Endothelial cell of umbilical vein (primary cell): ENCODE measurements at regions of chr2 and their contacts with region 1.

Region 1: DNA sequence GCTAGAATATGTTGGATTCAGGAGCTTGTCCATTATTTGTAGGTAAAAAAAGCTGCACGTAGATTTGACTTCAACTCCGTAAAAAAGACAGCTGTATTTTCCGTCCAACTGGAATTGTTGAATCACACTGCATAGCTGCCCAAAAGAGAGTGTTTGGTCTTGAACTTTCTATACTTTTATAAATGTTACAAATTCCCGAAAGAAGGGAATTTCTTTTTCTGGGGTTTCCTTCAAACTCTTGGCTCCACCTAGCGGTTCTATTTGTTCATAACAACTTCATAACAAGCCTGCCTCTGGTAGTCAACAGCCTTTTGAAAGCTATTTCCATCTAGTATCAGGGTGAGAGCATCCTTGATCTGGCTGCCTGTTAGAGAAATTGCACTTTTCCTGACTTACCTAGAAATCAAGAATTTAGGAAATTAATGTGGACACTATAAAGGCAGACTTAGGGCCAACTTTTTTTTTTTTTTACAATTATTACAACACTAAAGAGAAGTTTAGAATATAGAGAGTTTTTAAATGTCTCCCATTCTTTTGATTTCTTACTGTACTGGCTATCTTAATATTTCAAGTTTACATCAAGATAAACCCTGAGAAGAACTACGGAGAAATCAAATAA is 48.1 kb downstream of the TMEM185B start:
- DNase-seq: peak; percentile 75
- H3K4me3 ChIP-seq: no peak overlapping the region
- H3K27ac ChIP-seq: no peak overlapping the region
- H3K4me1 ChIP-seq: no peaks in the 10 kb centered on the region
- H3K27me3 ChIP-seq: no peaks in the 10 kb centered on the region
- CTCF ChIP-seq: peak; percentile 46 to 57
- POLR2A ChIP-seq: no peak

Region 2: GRCh38 chr2:119641562-119642258 is 533.4 kb before region 1 on chr2:
- CTCF ChIA-PET with region 1: interaction called, 34 read pairs
- POLR2A ChIA-PET with region 1: no interaction called
- dilution Hi-C with region 1: no loop called
- intact Hi-C with region 1: loop called (anchors 5 kb)
- DNase-seq: peak; percentile 78
- H3K4me3 ChIP-seq: no peak overlapping the region
- H3K27ac ChIP-seq: no peak overlapping the region
- H3K4me1 ChIP-seq: peaks cover 25% of the 10 kb centered on the region
- H3K27me3 ChIP-seq: peaks cover 2 to 5% of the 10 kb centered on the region in 2 experiments
- CTCF ChIP-seq: peak; percentile 92 to 95
- POLR2A ChIP-seq: no peak

Region 3: GRCh38 chr2:119753041-119753929 is 421.8 kb before region 1 on chr2:
- CTCF ChIA-PET with region 1: interaction called, 67 read pairs
- POLR2A ChIA-PET with region 1: no interaction called
- dilution Hi-C with region 1: no loop called
- intact Hi-C with region 1: loop called (anchors 1 kb)
- DNase-seq: peak; percentile 65
- H3K4me3 ChIP-seq: no peak overlapping the region
- H3K27ac ChIP-seq: no peak overlapping the region
- H3K4me1 ChIP-seq: peaks cover 14% of the 10 kb centered on the region
- H3K27me3 ChIP-seq: no peaks in the 10 kb centered on the region
- CTCF ChIP-seq: peak; percentile 67 to 68
- POLR2A ChIP-seq: no peak

Region 4: GRCh38 chr2:119888680-119889079 is 286.4 kb before region 1 on chr2:
- CTCF ChIA-PET with region 1: interaction called, 10 read pairs
- POLR2A ChIA-PET with region 1: no interaction called
- dilution Hi-C with region 1: no loop called
- intact Hi-C with region 1: no loop called
- DNase-seq: peak; percentile 27
- H3K4me3 ChIP-seq: no peak overlapping the region
- H3K27ac ChIP-seq: no peak overlapping the region
- H3K4me1 ChIP-seq: peaks cover 5% of the 10 kb centered on the region
- H3K27me3 ChIP-seq: no peaks in the 10 kb centered on the region
- CTCF ChIP-seq: no peak
- POLR2A ChIP-seq: no peak

Region 5: DNA sequence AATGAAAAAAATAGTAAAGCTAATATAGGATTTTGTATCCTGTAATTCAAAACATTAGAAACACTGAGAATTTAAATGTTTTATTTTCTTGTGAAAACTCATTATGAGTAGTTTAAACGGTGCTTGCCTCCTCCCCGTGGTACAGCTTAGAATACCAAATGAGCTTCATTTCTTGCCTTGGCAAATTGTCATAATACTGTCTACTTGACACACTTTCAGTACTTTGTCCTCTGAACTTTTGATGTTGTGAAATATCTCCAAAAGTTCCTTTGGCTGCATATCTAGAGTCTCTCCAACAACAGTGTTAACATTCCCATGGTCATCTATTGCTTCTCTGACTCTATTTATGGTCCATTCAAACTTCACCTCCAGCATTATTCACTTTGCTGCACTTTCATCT is 224.1 kb before region 1 on chr2:
- CTCF ChIA-PET with region 1: no interaction called
- POLR2A ChIA-PET with region 1: no interaction called
- dilution Hi-C with region 1: no loop called
- intact Hi-C with region 1: no loop called
- DNase-seq: no peak
- H3K4me3 ChIP-seq: no peak overlapping the region
- H3K27ac ChIP-seq: no peak overlapping the region
- H3K4me1 ChIP-seq: no peaks in the 10 kb centered on the region
- H3K27me3 ChIP-seq: no peaks in the 10 kb centered on the region
- CTCF ChIP-seq: no peak
- POLR2A ChIP-seq: no peak

Region 6: GRCh38 chr2:120018549-120018948 is 156.5 kb before region 1 on chr2:
- CTCF ChIA-PET with region 1: interaction called, 17 read pairs
- POLR2A ChIA-PET with region 1: no interaction called
- dilution Hi-C with region 1: no loop called
- intact Hi-C with region 1: loop called (anchors 2 kb)
- DNase-seq: no peak
- H3K4me3 ChIP-seq: no peak overlapping the region
- H3K27ac ChIP-seq: no peak overlapping the region
- H3K4me1 ChIP-seq: peaks cover 16% of the 10 kb centered on the region
- H3K27me3 ChIP-seq: no peaks in the 10 kb centered on the region
- CTCF ChIP-seq: no peak
- POLR2A ChIP-seq: no peak

Region 7: DNA sequence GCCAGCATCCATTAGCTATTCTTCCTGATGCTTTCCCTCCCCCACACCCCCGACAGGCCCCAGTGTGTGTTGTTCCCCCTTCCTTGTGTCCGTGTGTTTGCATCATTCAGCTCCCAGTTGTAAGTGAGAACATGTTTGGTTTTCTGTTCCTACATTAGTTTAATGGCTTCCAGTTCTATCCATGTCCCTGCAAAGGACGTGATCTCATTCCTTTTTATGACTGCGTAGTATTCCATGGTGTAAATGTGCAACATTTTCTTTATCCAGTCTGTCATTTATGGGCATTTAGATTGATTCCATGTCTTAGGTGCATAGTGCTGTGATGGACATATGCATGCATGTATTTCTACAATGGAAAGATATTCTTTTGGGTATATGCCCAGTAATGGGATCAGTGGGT is 56.6 kb before region 1 on chr2:
- CTCF ChIA-PET with region 1: interaction called, 13 read pairs
- POLR2A ChIA-PET with region 1: no interaction called
- dilution Hi-C with region 1: no loop called
- intact Hi-C with region 1: no loop called
- DNase-seq: no peak
- H3K4me3 ChIP-seq: no peak overlapping the region
- H3K27ac ChIP-seq: no peak overlapping the region
- H3K4me1 ChIP-seq: no peaks in the 10 kb centered on the region
- H3K27me3 ChIP-seq: no peaks in the 10 kb centered on the region
- CTCF ChIP-seq: no peak
- POLR2A ChIP-seq: no peak

Region 8: DNA sequence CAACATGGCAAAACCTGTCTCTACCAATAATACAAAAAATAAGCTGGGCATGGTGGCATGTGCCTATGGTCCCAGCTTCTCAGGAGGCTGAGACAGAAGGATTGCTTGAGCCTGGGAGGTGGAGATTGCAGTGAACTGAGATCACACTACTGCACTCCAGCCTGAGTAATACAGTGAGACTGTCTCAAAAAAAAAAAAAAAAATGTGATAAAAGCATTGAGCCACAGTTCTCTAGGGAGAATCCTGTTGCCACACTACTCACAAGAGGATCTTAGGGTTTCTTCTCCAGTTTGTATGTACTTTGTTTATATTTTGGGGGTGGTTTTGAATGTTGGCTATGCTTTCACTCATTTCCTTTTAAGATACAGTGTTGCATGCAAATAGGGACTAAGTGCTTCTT is 13.9 kb before region 1 on chr2:
- CTCF ChIA-PET with region 1: interaction called, 12 read pairs
- POLR2A ChIA-PET with region 1: no interaction called
- dilution Hi-C with region 1: no loop called
- intact Hi-C with region 1: no loop called
- DNase-seq: no peak
- H3K4me3 ChIP-seq: no peak overlapping the region
- H3K27ac ChIP-seq: no peak overlapping the region
- H3K4me1 ChIP-seq: no peaks in the 10 kb centered on the region
- H3K27me3 ChIP-seq: no peaks in the 10 kb centered on the region
- CTCF ChIP-seq: no peak
- POLR2A ChIP-seq: no peak